GM13977 (cell line): ENCODE measurements at regions of chr13 and their contacts with region 1.

Region 1: GRCh38 chr13:51125498-51126226 is 14.6 kb upstream of the C13orf42 start:
- DNase-seq: peak; percentile 52
- CTCF ChIP-seq: peak; percentile 83

Region 2: GRCh38 chr13:51814825-51815650 is 689.4 kb after region 1 on chr13:
- in situ Hi-C with region 1: loop called (anchors 25 kb)
- DNase-seq: peak; percentile 76
- CTCF ChIP-seq: peak; percentile 83

Region 3: DNA sequence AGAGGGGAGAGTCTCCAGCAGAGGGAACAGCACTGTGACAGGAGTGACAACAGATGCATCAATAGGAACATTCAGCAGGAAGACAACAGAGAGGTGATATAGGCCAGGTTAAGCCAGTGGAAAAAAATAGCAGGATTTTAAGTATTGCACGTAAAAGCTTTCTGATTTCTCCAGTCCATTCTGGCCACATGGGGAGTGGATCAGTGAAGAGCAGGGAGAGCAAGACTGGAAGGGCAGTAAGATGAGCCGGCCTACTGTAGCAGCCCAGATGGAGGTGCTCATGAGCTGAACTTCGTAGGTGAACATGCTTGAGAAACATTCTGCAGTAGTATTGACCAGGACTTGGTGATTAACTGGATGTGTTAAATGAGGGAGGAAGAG is 900.6 kb after region 1 on chr13:
- in situ Hi-C with region 1: no loop called
- DNase-seq: no peak
- CTCF ChIP-seq: no peak